ENCODE measurements at regions of chr17 and their contacts with region 1.

Region 1: GRCh38 chr17:82022981-82023374 is at the start of gene LRRC45:
- DNase-seq: peak; percentile 99
- H3K4me3 ChIP-seq: peak within 1 kb of the TSS; percentile 80
- H3K27ac ChIP-seq: no peak within 1 kb of the TSS
- H3K27me3 ChIP-seq: no peaks in the 10 kb centered on the region
- CTCF ChIP-seq: no peak
- polyA plus RNA-seq, gene LRRC45: 3.4 and 4.0 TPM in 2 replicates

Region 2: GRCh38 chr17:81959362-81960129 is 63.4 kb before region 1 on chr17:
- CTCF ChIA-PET with region 1: interaction called, 34 read pairs
- POLR2A ChIA-PET with region 1: interaction called, 9 read pairs
- DNase-seq: no peak
- H3K4me3 ChIP-seq: peak overlapping the region; percentile 7; the same call in 1 of the 2 replicates
- H3K27ac ChIP-seq: no peak overlapping the region
- H3K27me3 ChIP-seq: peaks cover 47% of the 10 kb centered on the region
- CTCF ChIP-seq: peak; percentile 45

Region 3: GRCh38 chr17:82037113-82037888 is 14.3 kb after region 1 on chr17 and contains the start of gene DCXR:
- CTCF ChIA-PET with region 1: interaction called, 7 read pairs
- POLR2A ChIA-PET with region 1: interaction called, 10 read pairs
- DNase-seq: peak; percentile 76
- H3K4me3 ChIP-seq: peak within 1 kb of the TSS; percentile 74
- H3K27ac ChIP-seq: peak within 1 kb of the TSS; percentile 61
- H3K27me3 ChIP-seq: no peaks in the 10 kb centered on the region
- CTCF ChIP-seq: peak; percentile 57
- polyA plus RNA-seq, gene DCXR: 35.5 and 55.6 TPM in 2 replicates

Region 4: DNA sequence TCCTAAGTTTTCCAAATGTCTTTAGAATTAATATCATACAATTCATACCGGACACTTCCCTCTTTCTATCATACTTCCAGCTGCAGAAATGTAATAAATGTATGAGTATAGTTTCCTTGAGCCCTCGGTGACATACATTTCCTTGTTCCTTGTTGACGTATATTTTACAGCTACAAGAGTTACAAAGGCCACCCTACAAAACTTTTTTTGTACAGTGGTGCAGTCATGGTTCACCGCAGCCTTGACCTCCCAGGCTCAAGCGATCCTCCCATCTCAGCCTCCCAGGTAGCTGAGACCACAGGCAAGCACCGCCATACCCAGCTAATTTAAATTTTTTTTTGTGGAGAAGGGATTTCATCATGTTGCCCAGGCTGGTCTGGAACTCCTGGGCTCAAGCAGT is 49.8 kb after region 1 on chr17:
- CTCF ChIA-PET with region 1: no interaction called
- POLR2A ChIA-PET with region 1: no interaction called
- DNase-seq: no peak
- H3K4me3 ChIP-seq: no peak overlapping the region
- H3K27ac ChIP-seq: no peak overlapping the region
- H3K27me3 ChIP-seq: no peaks in the 10 kb centered on the region
- CTCF ChIP-seq: no peak